Activated T-helper 1 cell treated with anti-CD3 and anti-CD28 coated beads, Interleukin-12 subunit alpha, Interleukin-12 subunit beta, Interleukin-2, Interleukin-4 antibody, amounts not matched to agents 30 ng/mL and 10 ng/mL and 1 ng/mL, durations not matched to agents 14 hours and 24 hours and 36 hours (primary cell): ENCODE measurements at regions of chr6 and their contacts with region 1.

Region 1: GRCh38 chr6:25992413-25993037 is 29.9 kb downstream of the TRIM38 start:
- DNase-seq: peak; percentile 91
- H3K4me3 Mint-ChIP-seq: peak overlapping the region; percentile 95
- H3K27ac Mint-ChIP-seq: peak overlapping the region; percentile 94
- H3K4me1 Mint-ChIP-seq: peaks cover 37% of the 10 kb centered on the region
- H3K27me3 Mint-ChIP-seq: no peaks in the 10 kb centered on the region

Region 2: GRCh38 chr6:25637960-25638434 is 354.5 kb before region 1 on chr6:
- intact Hi-C with region 1: no loop called
- DNase-seq: no peak
- H3K4me3 Mint-ChIP-seq: no peak overlapping the region
- H3K27ac Mint-ChIP-seq: no peak overlapping the region
- H3K4me1 Mint-ChIP-seq: no peaks in the 10 kb centered on the region
- H3K27me3 Mint-ChIP-seq: peaks cover 18% of the 10 kb centered on the region

Region 3: GRCh38 chr6:25788305-25788922 is 204.1 kb before region 1 on chr6:
- intact Hi-C with region 1: loop called (anchors 2 kb)
- DNase-seq: peak; percentile 13
- H3K4me3 Mint-ChIP-seq: no peak overlapping the region
- H3K27ac Mint-ChIP-seq: no peak overlapping the region
- H3K4me1 Mint-ChIP-seq: peaks cover 5% of the 10 kb centered on the region
- H3K27me3 Mint-ChIP-seq: peaks cover 4% of the 10 kb centered on the region

Region 4: GRCh38 chr6:25882051-25882496 is 110.5 kb before region 1 on chr6:
- intact Hi-C with region 1: loop called (anchors 1 kb)
- DNase-seq: peak; percentile 24
- H3K4me3 Mint-ChIP-seq: peak overlapping the region; percentile 86
- H3K27ac Mint-ChIP-seq: peak overlapping the region; percentile 72
- H3K4me1 Mint-ChIP-seq: peaks cover 15% of the 10 kb centered on the region
- H3K27me3 Mint-ChIP-seq: peaks cover 6% of the 10 kb centered on the region

Region 5: GRCh38 chr6:26003102-26003694 is 10.7 kb after region 1 on chr6:
- intact Hi-C with region 1: loop called (anchors 1 kb)
- DNase-seq: no peak
- H3K4me3 Mint-ChIP-seq: no peak overlapping the region
- H3K27ac Mint-ChIP-seq: no peak overlapping the region
- H3K4me1 Mint-ChIP-seq: peaks cover 13% of the 10 kb centered on the region
- H3K27me3 Mint-ChIP-seq: no peaks in the 10 kb centered on the region

Region 6: DNA sequence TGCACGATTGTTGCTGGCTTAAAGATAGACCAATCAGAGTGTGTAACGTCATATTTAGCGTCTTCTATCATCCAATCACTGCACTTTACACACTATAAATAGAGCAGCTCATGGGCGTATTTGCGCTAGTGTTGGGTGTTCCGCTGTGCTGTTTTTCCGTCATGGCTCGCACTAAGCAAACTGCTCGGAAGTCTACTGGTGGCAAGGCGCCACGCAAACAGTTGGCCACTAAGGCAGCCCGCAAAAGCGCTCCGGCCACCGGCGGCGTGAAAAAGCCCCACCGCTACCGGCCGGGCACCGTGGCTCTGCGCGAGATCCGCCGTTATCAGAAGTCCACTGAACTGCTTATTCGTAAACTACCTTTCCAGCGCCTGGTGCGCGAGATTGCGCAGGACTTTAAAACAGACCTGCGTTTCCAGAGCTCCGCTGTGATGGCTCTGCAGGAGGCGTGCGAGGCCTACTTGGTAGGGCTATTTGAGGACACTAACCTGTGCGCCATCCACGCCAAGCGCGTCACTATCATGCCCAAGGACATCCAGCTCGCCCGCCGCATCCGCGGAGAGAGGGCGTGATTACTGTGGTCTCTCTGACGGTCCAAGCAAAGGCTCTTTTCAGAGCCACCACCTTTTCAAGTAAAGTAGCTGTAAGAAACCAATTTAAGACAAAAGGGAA is 27.9 kb after region 1 on chr6:
- intact Hi-C with region 1: loop called (anchors 1 kb)
- DNase-seq: peak; percentile 80
- H3K4me3 Mint-ChIP-seq: peak overlapping the region; percentile 98
- H3K27ac Mint-ChIP-seq: peak overlapping the region; percentile 100
- H3K4me1 Mint-ChIP-seq: peaks cover 61% of the 10 kb centered on the region
- H3K27me3 Mint-ChIP-seq: peaks cover 2% of the 10 kb centered on the region

Region 7: GRCh38 chr6:26105842-26106241 is 113.3 kb after region 1 on chr6:
- intact Hi-C with region 1: no loop called
- DNase-seq: no peak
- H3K4me3 Mint-ChIP-seq: no peak overlapping the region
- H3K27ac Mint-ChIP-seq: no peak overlapping the region
- H3K4me1 Mint-ChIP-seq: peaks cover 30% of the 10 kb centered on the region
- H3K27me3 Mint-ChIP-seq: peaks cover 2% of the 10 kb centered on the region

Region 8: DNA sequence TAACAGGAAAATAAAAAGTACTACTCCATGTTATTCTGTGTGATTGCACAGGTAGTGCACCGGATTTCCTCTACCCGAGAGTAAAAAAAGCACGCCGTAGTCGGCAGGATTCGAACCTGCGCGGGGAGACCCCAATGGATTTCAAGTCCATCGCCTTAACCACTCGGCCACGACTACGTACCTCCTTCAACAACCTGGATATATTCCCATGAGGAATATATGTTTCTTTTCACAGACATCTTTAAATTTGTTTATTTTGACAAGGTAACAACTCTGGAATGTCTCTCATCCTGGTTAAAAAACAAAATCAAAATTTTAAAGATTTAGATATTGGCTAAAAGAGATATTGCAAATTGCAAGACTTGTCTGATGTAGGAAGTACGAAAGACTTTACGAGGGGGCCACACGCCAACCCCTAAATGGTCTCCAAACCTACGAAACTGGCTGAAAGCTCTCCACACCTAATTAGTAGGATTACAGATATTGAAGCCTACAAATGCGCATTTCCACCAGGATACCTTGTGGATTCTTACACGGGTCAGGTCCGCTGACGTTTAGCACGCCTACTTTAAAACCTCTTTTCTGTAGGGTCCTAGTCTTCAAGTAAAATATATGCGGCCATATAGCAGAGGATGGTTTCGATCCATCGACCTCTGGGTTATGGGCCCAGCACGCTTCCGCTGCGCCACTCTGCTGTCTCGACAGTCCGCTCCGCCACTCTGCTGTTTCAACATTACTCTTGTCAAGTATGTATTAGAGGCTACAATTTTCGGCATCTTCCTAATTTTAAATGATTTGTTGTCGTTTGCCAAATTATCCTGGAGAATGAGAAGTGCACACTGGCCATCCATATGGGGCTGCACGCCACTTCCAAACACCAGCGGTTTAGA is 320.2 kb after region 1 on chr6:
- intact Hi-C with region 1: no loop called
- DNase-seq: peak; percentile 72
- H3K4me3 Mint-ChIP-seq: peak overlapping the region; percentile 84
- H3K27ac Mint-ChIP-seq: peak overlapping the region; percentile 92
- H3K4me1 Mint-ChIP-seq: peaks cover 51% of the 10 kb centered on the region
- H3K27me3 Mint-ChIP-seq: no peaks in the 10 kb centered on the region